Naive thymus-derived CD4-positive, alpha-beta T cell (primary cell): ENCODE measurements at regions of chr4 and their contacts with region 1.

Region 1: GRCh38 chr4:75940692-75941253 is at the start of gene NAAA:
- DNase-seq: peak; percentile 57 to 87 (median 75)
- ATAC-seq: peak; percentile 92
- H3K4me3 ChIP-seq: peak within 1 kb of the TSS; percentile 100
- H3K4me3 Mint-ChIP-seq: peak within 1 kb of the TSS; percentile 96 to 99 (median 98)
- H3K27ac ChIP-seq: peak within 1 kb of the TSS; percentile 80
- H3K27ac Mint-ChIP-seq: peak within 1 kb of the TSS; percentile 90 to 98 (median 94)
- H3K4me1 ChIP-seq: peaks cover 9 to 12% of the 10 kb centered on the region in 2 donors
- H3K4me1 Mint-ChIP-seq: peaks cover 12 to 34% (median 22%) of the 10 kb centered on the region in 7 donors
- H3K27me3 ChIP-seq: no peaks in the 10 kb centered on the region
- H3K27me3 Mint-ChIP-seq: no peaks in the 10 kb centered on the region
- total RNA-seq, gene NAAA: 36.9 to 103 (median 80.3) TPM

Region 2: GRCh38 chr4:75514131-75514948 is 426.4 kb before region 1 on chr4 and contains the starts of genes RCHY1 and THAP6:
- CTCF ChIA-PET with region 1: no interaction called
- POLR2A ChIA-PET with region 1: interaction called, 9 read pairs
- intact Hi-C with region 1: loop called (anchors 1 kb)
- DNase-seq: peak; percentile 82 to 95 (median 93)
- ATAC-seq: peak; percentile 92
- H3K4me3 ChIP-seq: peak within 1 kb of the TSS; percentile 79
- H3K4me3 Mint-ChIP-seq: peak within 1 kb of the TSS in 1 of 10 donors; percentile 97
- H3K27ac ChIP-seq: peak within 1 kb of the TSS; percentile 98
- H3K27ac Mint-ChIP-seq: peak within 1 kb of the TSS in 7 of 9 donors; percentile 96 to 100 (median 98)
- H3K4me1 ChIP-seq: peaks cover 53 to 56% of the 10 kb centered on the region in 2 donors
- H3K4me1 Mint-ChIP-seq: peaks cover 30 to 63% (median 49%) of the 10 kb centered on the region in 7 donors
- H3K27me3 ChIP-seq: no peaks in the 10 kb centered on the region
- H3K27me3 Mint-ChIP-seq: no peaks in the 10 kb centered on the region
- total RNA-seq, gene RCHY1: 23.0 to 37.8 (median 29.6) TPM
- total RNA-seq, gene THAP6: 18.2 to 43.9 (median 25.1) TPM

Region 3: DNA sequence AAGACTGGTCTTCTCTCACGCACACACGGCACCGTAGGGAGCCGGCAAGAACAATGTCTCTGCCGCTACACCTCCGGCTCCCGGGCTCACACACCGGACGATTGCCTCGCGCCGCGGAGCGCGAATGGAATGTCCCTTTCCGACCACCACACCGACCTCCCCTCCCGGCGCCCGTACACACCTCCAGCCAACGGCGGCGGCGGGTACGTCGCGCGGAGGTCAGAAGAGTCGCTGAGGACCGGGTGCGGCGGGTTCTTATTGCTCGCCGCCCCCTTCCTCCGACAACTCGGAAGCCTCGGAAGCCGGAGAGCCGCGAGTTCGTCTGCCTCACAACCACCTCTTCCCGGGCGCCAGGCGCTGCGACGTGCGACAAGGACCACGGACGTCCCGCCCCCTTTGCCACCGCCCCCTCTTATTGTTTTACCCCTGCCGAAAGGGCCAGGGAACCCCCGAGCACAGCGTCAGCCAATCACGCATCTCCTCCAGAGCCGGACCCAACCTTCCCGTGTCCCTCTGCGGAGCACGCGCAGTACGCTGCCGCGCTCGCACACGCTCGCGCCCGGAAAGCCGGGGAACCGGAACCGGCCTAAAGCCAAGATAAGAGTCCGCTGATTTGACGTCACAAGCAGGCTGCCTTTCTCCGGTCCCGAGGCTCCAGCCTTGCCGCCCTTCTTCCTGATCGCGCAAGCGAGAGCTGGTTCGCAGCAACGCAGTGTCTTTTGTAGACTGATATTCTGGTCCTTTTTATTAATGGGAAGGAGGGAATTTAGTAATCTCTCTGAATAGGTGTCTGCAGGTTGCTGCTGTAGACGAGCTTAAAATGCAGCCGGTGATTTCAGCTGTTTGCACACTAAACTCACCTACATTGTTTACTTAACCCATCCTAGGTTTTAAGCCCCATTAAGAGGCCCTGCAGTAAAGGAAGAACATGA is 267.5 kb before region 1 on chr4 and contains the start of gene G3BP2:
- CTCF ChIA-PET with region 1: no interaction called
- POLR2A ChIA-PET with region 1: interaction called, 3 read pairs
- intact Hi-C with region 1: loop called (anchors 1 kb)
- DNase-seq: peak; percentile 87 to 99 (median 97)
- ATAC-seq: peak; percentile 97
- H3K4me3 ChIP-seq: peak within 1 kb of the TSS; percentile 91
- H3K4me3 Mint-ChIP-seq: peak within 1 kb of the TSS; percentile 96 to 100 (median 98)
- H3K27ac ChIP-seq: peak within 1 kb of the TSS; percentile 96
- H3K27ac Mint-ChIP-seq: peak within 1 kb of the TSS; percentile 92 to 100 (median 99)
- H3K4me1 ChIP-seq: peaks cover 38 to 43% of the 10 kb centered on the region in 2 donors
- H3K4me1 Mint-ChIP-seq: peaks cover 36 to 47% (median 44%) of the 10 kb centered on the region in 7 donors
- H3K27me3 ChIP-seq: no peaks in the 10 kb centered on the region
- H3K27me3 Mint-ChIP-seq: no peaks in the 10 kb centered on the region
- total RNA-seq, gene G3BP2: 161 to 299 (median 167) TPM

Region 4: GRCh38 chr4:75916091-75916661 is 24.6 kb before region 1 on chr4:
- CTCF ChIA-PET with region 1: interaction called, 7 read pairs
- POLR2A ChIA-PET with region 1: interaction called, 20 read pairs
- intact Hi-C with region 1: loop called (anchors 1 kb)
- DNase-seq: peak in 7 of 9 donors; percentile 17 to 65 (median 26)
- ATAC-seq: peak; percentile 88
- H3K4me3 ChIP-seq: no peak overlapping the region
- H3K4me3 Mint-ChIP-seq: no peak overlapping the region
- H3K27ac ChIP-seq: no peak overlapping the region
- H3K27ac Mint-ChIP-seq: peak overlapping the region in 3 of 9 donors; percentile 24 to 45 (median 42)
- H3K4me1 ChIP-seq: no peaks in the 10 kb centered on the region
- H3K4me1 Mint-ChIP-seq: peaks cover 0 to 4% (median 0%) of the 10 kb centered on the region in 7 donors
- H3K27me3 ChIP-seq: no peaks in the 10 kb centered on the region
- H3K27me3 Mint-ChIP-seq: no peaks in the 10 kb centered on the region

Region 5: GRCh38 chr4:75968084-75968483 is 27.3 kb after region 1 on chr4:
- CTCF ChIA-PET with region 1: no interaction called
- POLR2A ChIA-PET with region 1: no interaction called
- intact Hi-C with region 1: loop called in 1 of 2 experiments (anchors 1 kb)
- DNase-seq: no peak
- ATAC-seq: no peak
- H3K4me3 ChIP-seq: no peak overlapping the region
- H3K4me3 Mint-ChIP-seq: no peak overlapping the region
- H3K27ac ChIP-seq: no peak overlapping the region
- H3K27ac Mint-ChIP-seq: peak overlapping the region in 2 of 9 donors; percentile 4
- H3K4me1 ChIP-seq: no peaks in the 10 kb centered on the region
- H3K4me1 Mint-ChIP-seq: peaks cover 0 to 7% (median 0%) of the 10 kb centered on the region in 7 donors
- H3K27me3 ChIP-seq: no peaks in the 10 kb centered on the region
- H3K27me3 Mint-ChIP-seq: no peaks in the 10 kb centered on the region

Region 6: DNA sequence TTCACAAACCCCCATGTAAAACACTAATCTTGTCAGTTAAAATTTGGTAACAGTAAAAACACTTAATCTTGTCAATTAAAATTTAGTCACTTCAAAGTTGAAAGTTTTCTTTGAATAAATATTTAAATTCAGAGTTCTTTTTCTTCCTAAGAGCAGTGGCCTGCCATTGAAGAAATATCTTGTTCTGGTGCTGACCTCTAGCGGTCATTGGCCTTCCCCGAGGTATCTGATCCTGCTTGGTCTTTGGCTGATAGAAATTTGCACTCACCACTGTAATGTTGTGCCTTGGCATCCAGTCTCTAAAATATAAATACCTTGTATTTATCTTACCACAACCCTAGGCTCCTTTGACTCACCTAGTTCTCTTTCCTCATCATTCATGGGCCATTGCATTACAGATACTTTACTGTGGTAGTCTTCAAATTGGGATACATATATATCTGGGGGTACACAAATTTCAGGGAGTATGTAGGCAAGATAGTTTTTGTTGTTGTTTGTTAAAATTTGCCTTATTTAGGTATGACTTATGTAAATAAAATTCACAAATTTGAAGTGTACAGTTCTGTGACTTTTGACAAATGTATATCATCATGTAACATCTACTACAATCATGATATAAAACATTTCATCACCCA is 127.0 kb after region 1 on chr4:
- CTCF ChIA-PET with region 1: no interaction called
- POLR2A ChIA-PET with region 1: no interaction called
- intact Hi-C with region 1: loop called in 1 of 2 experiments (anchors 1 kb)
- DNase-seq: peak; percentile 30 to 72 (median 61)
- ATAC-seq: peak; percentile 93
- H3K4me3 ChIP-seq: no peak overlapping the region
- H3K4me3 Mint-ChIP-seq: no peak overlapping the region
- H3K27ac ChIP-seq: no peak overlapping the region
- H3K27ac Mint-ChIP-seq: no peak overlapping the region
- H3K4me1 ChIP-seq: no peaks in the 10 kb centered on the region
- H3K4me1 Mint-ChIP-seq: no peaks in the 10 kb centered on the region
- H3K27me3 ChIP-seq: no peaks in the 10 kb centered on the region
- H3K27me3 Mint-ChIP-seq: peaks cover 0 to 7% (median 0%) of the 10 kb centered on the region in 5 donors